Esophagus squamous epithelium (tissue), 5 donors: ENCODE measurements at regions of chr4 and their contacts with region 1.

Region 1: GRCh38 chr4:123380728-123381716 is 15.6 kb upstream of the SPRY1 start:
- DNase-seq: no peak
- H3K4me3 ChIP-seq: no peak overlapping the region
- H3K27ac ChIP-seq: no peak overlapping the region
- H3K4me1 ChIP-seq: no peaks in the 10 kb centered on the region
- H3K27me3 ChIP-seq: no peaks in the 10 kb centered on the region
- CTCF ChIP-seq: no peak
- POLR2A ChIP-seq: no peak

Region 2: DNA sequence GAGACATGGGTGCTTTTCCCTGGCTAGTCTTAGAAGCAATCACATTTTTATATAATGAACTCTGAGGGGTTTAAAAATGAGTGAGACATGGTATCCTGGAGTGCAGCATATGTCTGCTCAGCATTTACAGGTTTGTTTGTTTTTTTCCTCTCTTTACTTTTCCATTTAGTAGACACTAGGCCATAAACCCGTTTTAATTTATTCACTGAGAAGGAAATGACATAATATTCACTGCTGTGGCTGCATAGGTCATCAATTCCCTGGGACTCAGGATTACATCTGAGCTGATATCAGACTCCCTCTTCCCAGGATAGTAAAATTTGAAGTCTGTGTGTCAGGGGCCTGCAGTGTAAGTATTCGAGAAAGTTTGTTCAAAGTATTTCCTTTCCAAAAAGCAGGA is 163.4 kb before region 1 on chr4:
- intact Hi-C with region 1: no loop called
- DNase-seq: no peak
- H3K4me3 ChIP-seq: no peak overlapping the region
- H3K27ac ChIP-seq: no peak overlapping the region
- H3K4me1 ChIP-seq: no peaks in the 10 kb centered on the region
- H3K27me3 ChIP-seq: no peaks in the 10 kb centered on the region
- CTCF ChIP-seq: no peak
- POLR2A ChIP-seq: no peak

Region 3: DNA sequence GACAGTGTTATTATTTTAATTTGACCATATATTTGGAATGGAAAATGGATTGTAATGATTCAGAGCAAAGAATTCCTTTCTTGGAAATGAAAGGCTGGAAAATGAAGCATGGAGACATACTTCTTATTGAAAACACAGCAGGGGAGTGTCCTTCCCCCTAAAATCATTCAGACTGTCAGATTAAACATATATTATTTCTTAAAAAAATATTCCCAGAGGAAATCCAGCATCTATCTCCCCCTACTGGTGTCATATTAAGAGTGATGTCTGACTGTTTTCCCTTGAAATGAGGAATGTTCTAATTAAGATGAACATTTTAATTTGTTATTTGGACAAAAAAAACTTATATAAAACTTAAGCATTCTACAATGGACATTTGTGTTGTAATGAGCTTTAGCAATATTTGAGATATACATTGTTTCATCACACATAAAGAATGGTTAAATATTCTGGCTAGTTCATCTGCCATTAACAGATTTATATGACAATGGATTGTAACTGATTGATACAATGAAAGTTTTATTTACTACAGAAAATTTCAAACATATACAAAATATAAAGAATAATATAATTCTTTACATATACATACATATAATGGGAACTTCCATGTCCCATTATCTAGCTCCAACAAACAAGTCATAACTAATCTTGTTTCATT is 280.2 kb after region 1 on chr4:
- intact Hi-C with region 1: loop called (anchors 10 kb)
- DNase-seq: no peak
- H3K4me3 ChIP-seq: no peak overlapping the region
- H3K27ac ChIP-seq: no peak overlapping the region
- H3K4me1 ChIP-seq: no peaks in the 10 kb centered on the region
- H3K27me3 ChIP-seq: no peaks in the 10 kb centered on the region
- CTCF ChIP-seq: peak; percentile 20 to 68 (median 54)
- POLR2A ChIP-seq: no peak

Region 4: GRCh38 chr4:124111922-124112321 is 730.9 kb after region 1 on chr4:
- intact Hi-C with region 1: no loop called
- DNase-seq: no peak
- H3K4me3 ChIP-seq: no peak overlapping the region
- H3K27ac ChIP-seq: no peak overlapping the region
- H3K4me1 ChIP-seq: peaks cover 0 to 11% (median 2%) of the 10 kb centered on the region in 3 donors
- H3K27me3 ChIP-seq: no peaks in the 10 kb centered on the region
- CTCF ChIP-seq: peak; percentile 21 to 77 (median 56)
- POLR2A ChIP-seq: no peak